Calu3 (cell line): ENCODE measurements at regions of chr10 and their contacts with region 1.

Region 1: DNA sequence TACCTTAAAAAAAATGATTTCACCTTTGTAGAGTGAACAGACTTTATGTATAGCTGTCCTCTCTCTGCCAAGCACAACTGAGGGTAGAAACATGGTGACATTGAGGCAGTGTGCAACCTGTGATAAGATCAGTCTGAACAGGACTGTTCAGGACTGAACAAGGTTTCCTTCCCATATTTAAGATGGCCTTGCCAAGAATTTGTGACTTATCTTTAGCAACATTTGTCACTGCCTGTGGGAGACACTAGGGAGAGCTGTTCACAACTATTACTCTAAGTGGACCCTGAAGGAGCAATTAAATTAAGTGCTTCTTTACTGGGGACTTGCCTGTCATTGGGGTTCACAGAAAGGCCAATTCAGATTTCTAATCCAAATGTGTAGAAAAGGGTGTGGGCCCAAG is 6.7 kb downstream of the OR13A1 start:
- DNase-seq: no peak
- H3K4me3 Mint-ChIP-seq: no peak overlapping the region
- H3K27ac Mint-ChIP-seq: no peak overlapping the region
- H3K4me1 Mint-ChIP-seq: no peaks in the 10 kb centered on the region
- H3K27me3 Mint-ChIP-seq: peaks cover 19% of the 10 kb centered on the region
- CTCF ChIP-seq: no peak

Region 2: DNA sequence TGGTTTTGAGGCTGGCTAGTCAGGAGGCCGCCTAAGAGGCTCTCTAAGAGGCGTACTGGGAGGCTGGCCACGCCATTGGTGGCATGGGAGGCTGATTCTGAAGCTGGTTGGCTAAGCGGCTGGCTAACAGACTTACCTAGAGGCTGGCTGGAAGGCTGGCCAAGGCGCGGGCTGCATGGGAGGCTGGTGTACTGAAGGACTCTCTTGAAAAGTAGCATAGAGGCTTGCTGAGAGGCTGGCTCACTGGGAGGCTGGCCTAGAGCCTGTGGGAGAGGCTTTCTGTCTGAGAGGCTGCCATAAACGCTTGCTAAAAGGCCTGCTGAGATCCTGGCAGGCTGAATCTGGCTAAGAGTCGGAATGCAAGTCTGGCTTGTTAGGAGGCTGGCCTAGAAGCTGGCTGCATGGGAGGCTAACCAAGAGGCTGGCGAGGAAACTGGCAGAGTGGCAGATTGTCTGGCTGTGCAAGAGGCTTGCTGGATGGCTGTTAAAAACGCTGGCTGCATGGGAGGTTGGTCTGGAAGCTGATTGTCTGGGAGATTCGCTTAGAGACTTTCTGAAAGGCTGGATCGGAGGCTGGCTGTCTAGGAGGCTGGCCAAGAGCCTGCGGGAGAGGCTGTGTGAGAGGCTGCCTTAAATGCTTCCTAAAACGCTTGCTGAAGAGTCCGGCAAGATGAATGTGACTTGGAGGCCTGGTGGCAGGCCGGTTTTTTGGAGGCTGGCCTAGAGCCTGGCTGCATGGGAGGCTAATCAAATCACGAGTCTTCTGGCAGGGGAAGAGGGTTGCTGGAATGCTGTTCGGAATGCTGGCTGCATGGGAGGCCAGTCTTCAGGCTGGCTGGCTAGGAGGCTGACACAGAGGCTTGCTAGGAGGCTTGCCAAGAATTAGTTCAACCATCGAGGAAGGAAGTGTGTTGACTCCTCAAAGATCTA is 127.5 kb before region 1 on chr10:
- CTCF ChIA-PET with region 1: no interaction called
- intact Hi-C with region 1: no loop called
- DNase-seq: no peak
- H3K4me3 Mint-ChIP-seq: no peak overlapping the region
- H3K27ac Mint-ChIP-seq: no peak overlapping the region
- H3K4me1 Mint-ChIP-seq: no peaks in the 10 kb centered on the region
- H3K27me3 Mint-ChIP-seq: no peaks in the 10 kb centered on the region
- CTCF ChIP-seq: no peak

Region 3: DNA sequence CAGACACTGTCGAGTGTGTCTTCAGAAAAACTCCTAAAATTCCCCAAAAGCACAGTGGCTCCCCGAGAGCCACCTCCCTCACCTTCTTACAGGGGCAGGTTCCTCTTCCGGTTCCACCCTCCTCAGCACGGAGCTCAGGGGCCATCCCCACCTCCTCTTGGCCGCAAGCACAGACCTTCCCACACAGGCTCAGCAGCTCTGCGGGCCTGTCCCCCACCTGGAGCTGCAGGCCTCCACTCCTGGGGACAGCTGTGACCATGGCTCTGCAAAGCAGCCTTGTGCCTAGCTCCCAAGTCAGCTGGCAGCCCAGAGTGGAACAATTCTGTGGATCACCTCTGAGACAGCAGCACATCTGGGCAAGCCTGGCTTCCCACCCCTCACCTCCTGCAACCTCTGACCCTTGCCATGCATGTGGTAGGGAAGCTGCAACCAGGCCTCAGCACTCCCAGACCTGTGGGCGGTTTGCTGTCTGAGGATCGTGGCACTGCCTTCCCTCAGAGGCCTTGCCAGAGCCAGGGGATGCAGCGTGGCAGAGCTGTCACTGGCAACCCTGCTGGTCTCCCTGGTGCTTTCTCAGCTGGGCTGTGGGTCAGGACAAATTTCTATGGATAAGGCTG is 145.0 kb after region 1 on chr10:
- CTCF ChIA-PET with region 1: no interaction called
- intact Hi-C with region 1: loop called (anchors 10 kb)
- DNase-seq: no peak
- H3K4me3 Mint-ChIP-seq: no peak overlapping the region
- H3K27ac Mint-ChIP-seq: no peak overlapping the region
- H3K4me1 Mint-ChIP-seq: no peaks in the 10 kb centered on the region
- H3K27me3 Mint-ChIP-seq: no peaks in the 10 kb centered on the region
- CTCF ChIP-seq: no peak